ENCODE measurements at regions of chr15 and their contacts with region 1.

Region 1: GRCh38 chr15:64825431-64826294 is at the start of gene PIF1:
- DNase-seq: peak; percentile 96
- H3K4me3 Mint-ChIP-seq: peak within 1 kb of the TSS; percentile 88
- H3K27ac Mint-ChIP-seq: peak within 1 kb of the TSS; percentile 92
- H3K4me1 Mint-ChIP-seq: peaks cover 45% of the 10 kb centered on the region
- H3K27me3 Mint-ChIP-seq: no peaks in the 10 kb centered on the region

Region 2: GRCh38 chr15:64809649-64810496 is 15.8 kb before region 1 on chr15:
- CTCF ChIA-PET with region 1: interaction called, 33 read pairs
- DNase-seq: peak; percentile 83
- H3K4me3 Mint-ChIP-seq: no peak overlapping the region
- H3K27ac Mint-ChIP-seq: no peak overlapping the region
- H3K4me1 Mint-ChIP-seq: no peaks in the 10 kb centered on the region
- H3K27me3 Mint-ChIP-seq: peaks cover 51% of the 10 kb centered on the region

Region 3: DNA sequence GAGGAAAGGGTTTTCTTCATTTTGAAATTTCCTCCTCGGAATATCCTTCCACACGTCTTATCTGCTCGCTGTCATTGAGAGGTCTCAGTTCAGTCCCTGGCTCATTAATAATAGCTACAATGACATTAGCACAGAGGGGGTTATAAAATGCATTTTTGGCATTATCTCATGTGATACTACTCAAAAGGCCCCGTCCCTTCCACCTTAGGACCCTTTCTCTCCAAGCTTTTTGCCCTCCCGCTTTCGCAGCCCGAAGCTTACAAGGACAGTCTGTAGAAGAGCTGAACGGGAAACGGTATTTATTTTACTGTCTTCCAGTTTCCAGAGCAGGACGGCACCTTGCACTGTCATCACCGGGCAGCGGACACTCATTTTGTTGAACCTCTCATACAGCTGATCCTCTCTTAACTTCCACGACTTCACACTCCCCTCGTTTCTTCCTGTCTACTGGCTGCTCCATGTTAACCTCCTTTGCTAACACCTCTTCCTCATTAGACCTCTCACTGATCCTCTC is 10.4 kb after region 1 on chr15:
- CTCF ChIA-PET with region 1: interaction called, 12 read pairs
- DNase-seq: no peak
- H3K4me3 Mint-ChIP-seq: peak overlapping the region; percentile 2
- H3K27ac Mint-ChIP-seq: peak overlapping the region; percentile 80
- H3K4me1 Mint-ChIP-seq: peaks cover 52% of the 10 kb centered on the region
- H3K27me3 Mint-ChIP-seq: peaks cover 9% of the 10 kb centered on the region

Region 4: DNA sequence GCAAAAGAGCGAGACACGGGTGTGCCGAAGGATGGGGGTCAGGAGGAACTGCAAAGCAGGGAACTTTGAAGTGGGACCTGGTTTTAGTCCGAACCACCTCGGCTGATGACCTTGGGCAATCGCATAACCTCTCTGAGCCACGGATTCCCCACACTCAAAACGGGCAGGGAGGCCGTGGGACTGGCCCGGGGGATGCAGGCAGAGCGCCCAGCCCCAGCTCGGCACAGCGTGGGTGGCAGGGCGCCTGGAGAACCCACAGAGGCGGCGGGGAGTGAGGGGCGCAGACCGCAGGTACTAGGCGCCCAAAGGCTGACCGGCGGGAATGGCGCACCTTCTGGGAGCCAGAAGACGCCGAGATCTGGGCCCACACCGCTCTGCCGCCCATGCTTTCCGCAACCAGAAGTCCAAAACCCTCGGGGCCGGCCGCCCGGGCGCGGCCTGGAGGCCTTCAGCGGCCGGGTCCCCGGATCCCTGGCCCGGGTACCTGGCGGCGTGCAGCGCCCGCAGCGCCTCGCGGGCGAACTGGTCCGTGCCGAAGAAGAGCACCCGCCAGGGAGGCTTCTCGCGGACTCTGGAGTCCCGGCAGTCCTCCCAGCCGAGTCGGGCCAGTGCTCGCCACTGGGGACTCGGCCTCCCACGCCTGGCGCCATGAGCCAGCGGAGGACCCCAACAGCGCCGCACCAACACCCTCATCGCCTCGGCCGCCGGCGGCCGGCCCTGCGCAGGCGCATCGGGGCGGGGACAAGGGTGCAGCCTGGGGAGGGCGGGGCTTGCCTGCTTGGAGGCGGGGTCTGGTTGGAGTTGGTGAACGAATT is 203.5 kb after region 1 on chr15 and contains the start of gene MTFMT:
- CTCF ChIA-PET with region 1: no interaction called
- DNase-seq: peak; percentile 96
- H3K4me3 Mint-ChIP-seq: peak within 1 kb of the TSS; percentile 87
- H3K27ac Mint-ChIP-seq: peak within 1 kb of the TSS; percentile 79
- H3K4me1 Mint-ChIP-seq: peaks cover 26% of the 10 kb centered on the region
- H3K27me3 Mint-ChIP-seq: peaks cover 24% of the 10 kb centered on the region

Region 5: DNA sequence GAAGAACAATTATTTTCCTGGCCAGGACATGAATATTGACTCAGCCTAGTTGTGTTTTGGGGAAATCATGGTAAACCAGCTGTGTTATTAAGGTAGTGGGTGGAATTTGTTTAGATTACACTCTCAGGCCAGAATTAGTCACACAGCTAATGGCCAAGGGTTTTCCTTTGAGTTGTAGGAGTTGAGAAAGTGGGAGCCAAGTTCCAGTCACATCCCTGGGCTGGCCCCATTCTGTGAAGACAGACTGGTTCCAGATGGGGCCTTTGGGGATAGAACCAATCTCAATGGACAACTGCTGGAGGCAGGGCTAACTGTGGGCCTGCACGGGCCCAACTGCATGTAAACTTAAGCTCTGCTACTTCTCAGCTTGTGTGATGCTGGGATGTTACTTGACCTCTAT is 243.5 kb after region 1 on chr15:
- CTCF ChIA-PET with region 1: no interaction called
- DNase-seq: no peak
- H3K4me3 Mint-ChIP-seq: no peak overlapping the region
- H3K27ac Mint-ChIP-seq: no peak overlapping the region
- H3K4me1 Mint-ChIP-seq: peaks cover 5% of the 10 kb centered on the region
- H3K27me3 Mint-ChIP-seq: peaks cover 76% of the 10 kb centered on the region

Measured in activated naive CD4-positive, alpha-beta T cell treated with anti-CD3 and anti-CD28 coated beads, Interleukin-2, amount 10 ng/mL, durations not matched to agents 7 days and 5 days (primary cell).